ENCODE measurements at regions of chr11 and their contacts with region 1.

Region 1: DNA sequence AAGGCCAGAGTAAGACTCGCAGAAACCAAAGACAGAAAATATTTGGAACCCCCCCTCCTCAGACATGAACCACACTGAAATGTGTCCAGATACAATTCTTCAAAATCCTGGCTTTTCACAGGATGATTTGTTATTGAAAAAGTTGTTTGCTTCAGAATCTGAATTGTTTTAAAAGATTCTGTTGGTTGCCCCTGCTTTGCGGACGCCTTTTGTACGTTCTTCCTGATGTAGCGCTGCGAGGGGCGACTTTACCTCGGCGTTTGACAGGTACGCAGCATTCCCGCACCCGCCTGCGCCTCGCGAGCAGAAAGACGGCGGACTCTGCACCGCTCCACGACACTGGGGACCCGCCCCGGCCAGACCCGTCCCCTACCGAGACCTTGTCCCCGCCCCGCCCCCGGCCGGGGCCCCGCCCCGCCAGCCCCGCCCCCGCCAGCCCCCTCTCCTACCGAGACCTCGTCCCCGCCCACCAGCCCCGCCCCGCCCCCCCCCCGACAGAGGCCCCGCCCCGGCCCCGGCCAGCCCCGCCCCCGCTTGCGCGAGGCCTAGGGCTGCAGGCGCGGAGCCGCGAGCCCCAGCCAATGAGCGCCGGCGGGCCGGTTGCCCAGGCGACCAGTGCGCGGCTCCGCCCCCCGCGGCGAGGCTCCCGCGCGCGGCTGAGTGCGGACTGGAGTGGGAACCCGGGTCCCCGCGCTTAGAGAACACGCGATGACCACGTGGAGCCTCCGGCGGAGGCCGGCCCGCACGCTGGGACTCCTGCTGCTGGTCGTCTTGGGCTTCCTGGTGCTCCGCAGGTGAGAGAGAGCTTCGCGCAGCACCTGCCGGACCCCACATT is at the start of gene GLB1L2:
- DNase-seq: peak; percentile 76
- H3K4me3 ChIP-seq: peak within 1 kb of the TSS; percentile 48 to 59
- H3K27ac ChIP-seq: peak within 1 kb of the TSS; percentile 66 to 68
- H3K4me1 ChIP-seq: peaks cover 4% of the 10 kb centered on the region
- H3K27me3 ChIP-seq: no peaks in the 10 kb centered on the region
- CTCF ChIP-seq: no peak
- POLR2A ChIP-seq: peak; percentile 25
- total RNA-seq, gene GLB1L2: 45.6 to 60.0 TPM

Region 2: GRCh38 chr11:134223836-134224709 is 107.5 kb before region 1 on chr11 and contains the starts of genes NCAPD3 and VPS26B:
- intact Hi-C with region 1: loop called (anchors 10 kb)
- DNase-seq: peak; percentile 97
- H3K4me3 ChIP-seq: peak within 1 kb of the TSS; percentile 81 to 98
- H3K27ac ChIP-seq: peak within 1 kb of the TSS; percentile 91 to 92
- H3K4me1 ChIP-seq: peaks cover 11% of the 10 kb centered on the region
- H3K27me3 ChIP-seq: no peaks in the 10 kb centered on the region
- CTCF ChIP-seq: peak in 1 of 4 experiments; percentile 37
- POLR2A ChIP-seq: peak; percentile 86
- total RNA-seq, gene NCAPD3: 44.4 to 61.9 TPM
- total RNA-seq, gene VPS26B: 67.6 to 80.8 TPM

Measured in prostate gland (tissue), 2 donors.